Aorta (tissue), 5 donors: ENCODE measurements at regions of chr5 and their contacts with region 1.

Region 1: GRCh38 chr5:128213340-128213739 is 129.8 kb downstream of the SLC12A2 start:
- DNase-seq: no peak
- ATAC-seq: no peak
- H3K4me3 ChIP-seq: no peak overlapping the region
- H3K27ac ChIP-seq: no peak overlapping the region
- H3K4me1 ChIP-seq: no peaks in the 10 kb centered on the region
- H3K27me3 ChIP-seq: no peaks in the 10 kb centered on the region

Region 2: DNA sequence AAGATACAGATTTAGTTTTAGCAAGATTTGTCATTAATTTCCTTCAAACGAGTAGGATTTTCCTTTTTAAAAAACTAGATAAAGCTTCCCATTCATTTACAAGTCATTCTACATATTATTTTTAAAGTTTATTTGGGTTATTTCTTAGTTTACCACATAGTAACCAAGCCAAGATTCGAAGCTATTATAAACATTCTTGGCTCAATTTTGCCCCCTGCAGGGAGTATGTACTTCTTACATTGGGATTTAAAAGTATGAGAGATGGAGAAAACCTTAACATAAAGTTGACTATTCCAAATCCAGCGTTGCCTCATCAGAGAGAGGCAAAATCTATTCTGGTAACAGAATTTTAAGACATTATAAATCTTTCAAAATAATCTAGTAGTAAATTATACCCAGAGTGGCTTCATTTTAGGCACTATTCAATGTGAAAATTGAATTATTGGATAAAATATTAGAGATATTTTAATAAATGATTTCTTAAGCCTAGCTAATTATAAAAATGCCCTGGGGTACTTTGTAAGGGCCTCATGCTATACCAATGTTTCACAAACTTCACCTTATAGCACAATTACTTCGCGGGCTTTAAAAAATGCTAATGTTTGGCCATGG is 285.6 kb after region 1 on chr5:
- intact Hi-C with region 1: loop called in 1 of 2 experiments (anchors 10 kb)
- DNase-seq: no peak
- ATAC-seq: no peak
- H3K4me3 ChIP-seq: no peak overlapping the region
- H3K27ac ChIP-seq: no peak overlapping the region
- H3K4me1 ChIP-seq: no peaks in the 10 kb centered on the region
- H3K27me3 ChIP-seq: no peaks in the 10 kb centered on the region

Region 3: GRCh38 chr5:128674825-128675446 is 461.6 kb after region 1 on chr5:
- intact Hi-C with region 1: loop called in 1 of 2 experiments (anchors 10 kb)
- DNase-seq: no peak
- ATAC-seq: no peak
- H3K4me3 ChIP-seq: no peak overlapping the region
- H3K27ac ChIP-seq: no peak overlapping the region
- H3K4me1 ChIP-seq: no peaks in the 10 kb centered on the region
- H3K27me3 ChIP-seq: no peaks in the 10 kb centered on the region

Region 4: GRCh38 chr5:128844354-128844923 is 631.1 kb after region 1 on chr5:
- intact Hi-C with region 1: loop called (anchors 5 kb)
- DNase-seq: no peak
- ATAC-seq: no peak
- H3K4me3 ChIP-seq: no peak overlapping the region
- H3K27ac ChIP-seq: no peak overlapping the region
- H3K4me1 ChIP-seq: no peaks in the 10 kb centered on the region
- H3K27me3 ChIP-seq: no peaks in the 10 kb centered on the region